ENCODE measurements at regions of chr15 and their contacts with region 1.

Region 1: DNA sequence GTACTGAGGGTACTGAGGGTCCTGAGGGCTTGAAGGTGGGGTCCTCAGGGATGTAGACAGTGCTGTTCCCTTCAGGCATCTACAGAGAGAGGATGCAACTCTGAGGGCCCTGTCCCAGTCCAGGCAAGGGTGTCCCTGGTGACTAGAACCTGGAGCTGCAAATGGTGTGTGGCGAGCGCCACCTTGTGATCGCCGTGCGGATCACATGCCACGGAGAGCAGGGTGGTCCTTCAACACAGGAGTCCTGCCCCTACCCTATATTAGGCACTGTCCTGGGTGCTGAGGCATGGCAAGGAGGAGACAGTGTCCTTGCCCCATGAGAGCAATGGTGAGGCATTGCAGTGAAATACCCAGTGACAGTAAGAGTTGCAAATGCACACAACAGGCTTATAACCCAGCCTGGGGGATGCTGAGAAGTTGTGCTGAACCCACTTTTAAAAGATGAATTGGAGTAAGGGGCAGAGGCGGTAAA is 23.6 kb downstream of the RHCG start:
- DNase-seq: peak; percentile 80 to 89
- H3K4me3 ChIP-seq: no peak overlapping the region
- H3K4me3 Mint-ChIP-seq: no peak overlapping the region
- H3K27ac Mint-ChIP-seq: no peak overlapping the region
- H3K4me1 ChIP-seq: no peaks in the 10 kb centered on the region
- H3K4me1 Mint-ChIP-seq: no peaks in the 10 kb centered on the region
- H3K27me3 ChIP-seq: peaks cover 1% of the 10 kb centered on the region; the same call in 1 of the 2 replicates
- H3K27me3 Mint-ChIP-seq: peaks cover 12% of the 10 kb centered on the region
- CTCF ChIP-seq: peak; percentile 89 to 91

Region 2: DNA sequence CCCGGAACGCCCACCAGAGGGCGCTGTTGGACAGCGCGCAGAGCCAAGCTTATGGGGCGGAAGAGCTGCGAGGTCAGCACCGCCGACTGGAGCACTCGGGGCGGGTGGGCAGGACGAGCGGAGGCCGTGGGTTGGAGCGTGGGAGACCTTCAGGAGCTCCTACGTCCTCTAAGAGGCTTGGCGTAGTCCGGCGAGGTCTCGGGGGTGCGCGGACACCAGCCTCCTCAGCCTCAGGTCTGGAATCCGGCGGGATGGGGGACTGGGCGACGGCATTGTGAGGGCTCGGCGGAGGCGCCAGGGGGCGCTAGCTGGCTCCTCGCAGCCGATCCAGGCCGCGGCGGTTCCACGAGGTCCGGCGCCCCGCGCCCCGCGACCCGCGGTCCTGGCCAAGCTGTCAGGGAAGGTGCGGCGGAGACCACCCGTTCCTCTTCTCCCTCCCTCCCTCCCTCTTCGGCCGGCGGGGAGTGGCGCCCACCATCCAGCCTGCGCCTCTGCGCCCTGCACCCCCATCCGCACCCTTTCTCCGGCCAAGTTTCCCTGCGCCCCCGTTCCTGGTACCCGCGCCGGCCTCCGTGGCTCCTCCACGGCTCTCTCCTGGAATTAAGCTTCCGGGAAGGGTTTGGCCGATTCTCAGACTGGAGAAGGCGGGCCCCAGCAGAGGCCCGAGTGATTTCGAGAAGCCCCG is 113.9 kb before region 1 on chr15:
- CTCF ChIA-PET with region 1: interaction called, 10 read pairs
- POLR2A ChIA-PET with region 1: no interaction called
- intact Hi-C with region 1: loop called (anchors 1 kb)
- DNase-seq: peak; percentile 55 to 83
- H3K4me3 ChIP-seq: peak overlapping the region; percentile 65
- H3K4me3 Mint-ChIP-seq: peak overlapping the region; percentile 78
- H3K27ac Mint-ChIP-seq: no peak overlapping the region
- H3K4me1 ChIP-seq: no peaks in the 10 kb centered on the region
- H3K4me1 Mint-ChIP-seq: no peaks in the 10 kb centered on the region
- H3K27me3 ChIP-seq: peaks cover 6% of the 10 kb centered on the region
- H3K27me3 Mint-ChIP-seq: peaks cover 42% of the 10 kb centered on the region
- CTCF ChIP-seq: peak; percentile 57 to 97

Region 3: DNA sequence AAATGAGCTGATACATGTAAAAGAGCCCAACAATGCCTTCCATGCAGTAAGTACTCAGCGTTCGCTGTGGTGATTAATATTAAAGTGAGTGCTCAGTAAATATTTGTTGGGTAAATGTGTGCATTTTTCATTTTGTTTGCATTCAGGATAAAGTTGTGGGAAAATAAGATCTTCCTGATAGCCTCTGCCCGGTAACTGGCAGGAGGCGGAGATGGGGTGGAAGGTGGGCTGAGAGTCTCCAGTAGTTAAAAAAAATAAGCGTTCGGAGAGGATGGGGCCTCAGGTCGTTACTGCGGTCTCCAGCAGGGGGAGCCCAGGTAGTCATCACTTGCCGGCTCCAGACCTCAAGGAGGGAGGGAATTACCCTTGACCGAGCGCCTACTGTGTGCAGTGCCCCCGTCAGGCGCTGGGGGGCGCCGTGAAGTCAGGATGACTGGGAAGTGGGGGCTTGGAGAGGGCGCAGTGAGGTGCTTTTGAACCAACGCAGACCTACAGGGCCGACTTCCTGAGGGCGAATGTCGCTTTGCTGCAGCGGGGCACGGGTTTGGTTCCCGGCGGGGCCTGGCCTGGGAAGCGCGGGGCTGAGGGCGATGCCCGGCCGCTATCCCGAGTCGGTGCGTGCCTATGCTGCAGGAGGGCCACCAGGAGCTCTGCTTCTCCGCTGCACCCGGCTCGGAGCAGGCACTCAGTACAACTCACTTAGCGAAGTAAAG is 56.5 kb before region 1 on chr15:
- CTCF ChIA-PET with region 1: interaction called, 5 read pairs
- POLR2A ChIA-PET with region 1: no interaction called
- intact Hi-C with region 1: loop called (anchors 1 kb)
- DNase-seq: peak; percentile 85 to 89
- H3K4me3 ChIP-seq: no peak overlapping the region
- H3K4me3 Mint-ChIP-seq: no peak overlapping the region
- H3K27ac Mint-ChIP-seq: no peak overlapping the region
- H3K4me1 ChIP-seq: no peaks in the 10 kb centered on the region
- H3K4me1 Mint-ChIP-seq: no peaks in the 10 kb centered on the region
- H3K27me3 ChIP-seq: peaks cover 3% of the 10 kb centered on the region
- H3K27me3 Mint-ChIP-seq: peaks cover 22% of the 10 kb centered on the region
- CTCF ChIP-seq: peak; percentile 86 to 94

Region 4: DNA sequence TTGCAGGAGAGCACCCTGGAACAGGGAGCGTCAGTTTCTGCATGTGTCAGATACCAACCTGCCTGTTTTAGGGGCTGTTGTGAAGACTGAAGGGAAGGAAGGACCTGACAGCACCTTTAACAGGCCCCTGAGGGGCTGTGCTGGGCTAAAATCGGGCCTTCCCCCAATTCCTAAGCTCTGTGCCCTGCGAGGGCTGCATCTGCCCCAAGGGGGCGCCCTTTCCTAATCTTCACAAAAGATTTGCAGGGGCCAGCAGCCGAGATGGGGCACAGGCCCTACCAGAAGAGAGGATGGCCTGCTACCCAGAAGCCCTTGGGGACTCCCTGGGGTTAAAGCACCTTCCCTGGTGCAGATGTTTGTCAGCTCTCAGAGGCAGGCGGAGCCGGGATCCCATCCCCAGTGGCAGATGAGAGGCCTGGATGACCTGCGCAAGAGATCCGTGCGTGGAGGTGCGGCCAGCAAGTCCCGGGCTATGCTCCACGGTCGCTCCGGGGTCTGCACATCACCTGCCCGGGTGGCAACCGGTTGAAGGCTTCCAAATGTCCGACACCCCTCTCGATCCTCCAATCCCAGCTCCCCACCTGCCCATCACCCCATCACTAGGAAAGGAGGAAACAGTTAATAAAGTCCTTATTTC is 30.0 kb before region 1 on chr15:
- CTCF ChIA-PET with region 1: interaction called, 34 read pairs
- POLR2A ChIA-PET with region 1: no interaction called
- intact Hi-C with region 1: loop called (anchors 1 kb)
- DNase-seq: peak; percentile 70 to 82
- H3K4me3 ChIP-seq: no peak overlapping the region
- H3K4me3 Mint-ChIP-seq: no peak overlapping the region
- H3K27ac Mint-ChIP-seq: no peak overlapping the region
- H3K4me1 ChIP-seq: no peaks in the 10 kb centered on the region
- H3K4me1 Mint-ChIP-seq: peaks cover 1% of the 10 kb centered on the region
- H3K27me3 ChIP-seq: no peaks in the 10 kb centered on the region
- H3K27me3 Mint-ChIP-seq: no peaks in the 10 kb centered on the region
- CTCF ChIP-seq: peak; percentile 76 to 77

Region 5: GRCh38 chr15:89459271-89460038 is 13.4 kb before region 1 on chr15:
- CTCF ChIA-PET with region 1: no interaction called
- POLR2A ChIA-PET with region 1: no interaction called
- intact Hi-C with region 1: loop called (anchors 2 kb)
- DNase-seq: peak; percentile 43 to 68
- H3K4me3 ChIP-seq: no peak overlapping the region
- H3K4me3 Mint-ChIP-seq: peak overlapping the region; percentile 32
- H3K27ac Mint-ChIP-seq: peak overlapping the region; percentile 78
- H3K4me1 ChIP-seq: peaks cover 57% of the 10 kb centered on the region
- H3K4me1 Mint-ChIP-seq: peaks cover 26% of the 10 kb centered on the region
- H3K27me3 ChIP-seq: no peaks in the 10 kb centered on the region
- H3K27me3 Mint-ChIP-seq: no peaks in the 10 kb centered on the region
- CTCF ChIP-seq: no peak

Region 6: GRCh38 chr15:89506026-89506686 is 33.3 kb after region 1 on chr15:
- CTCF ChIA-PET with region 1: no interaction called
- POLR2A ChIA-PET with region 1: no interaction called
- intact Hi-C with region 1: no loop called
- DNase-seq: no peak
- H3K4me3 ChIP-seq: no peak overlapping the region
- H3K4me3 Mint-ChIP-seq: no peak overlapping the region
- H3K27ac Mint-ChIP-seq: no peak overlapping the region
- H3K4me1 ChIP-seq: peaks cover 3% of the 10 kb centered on the region; the same call in 1 of the 2 replicates
- H3K4me1 Mint-ChIP-seq: no peaks in the 10 kb centered on the region
- H3K27me3 ChIP-seq: no peaks in the 10 kb centered on the region
- H3K27me3 Mint-ChIP-seq: peaks cover 2% of the 10 kb centered on the region
- CTCF ChIP-seq: no peak

Region 7: GRCh38 chr15:89958074-89958805 is 485.4 kb after region 1 on chr15:
- CTCF ChIA-PET with region 1: no interaction called
- POLR2A ChIA-PET with region 1: no interaction called
- intact Hi-C with region 1: no loop called
- DNase-seq: peak; percentile 7 to 41
- H3K4me3 ChIP-seq: no peak overlapping the region
- H3K4me3 Mint-ChIP-seq: no peak overlapping the region
- H3K27ac Mint-ChIP-seq: no peak overlapping the region
- H3K4me1 ChIP-seq: no peaks in the 10 kb centered on the region
- H3K4me1 Mint-ChIP-seq: no peaks in the 10 kb centered on the region
- H3K27me3 ChIP-seq: no peaks in the 10 kb centered on the region
- H3K27me3 Mint-ChIP-seq: no peaks in the 10 kb centered on the region
- CTCF ChIP-seq: no peak